ENCODE measurements at regions of chr10 and their contacts with region 1.

Region 1: DNA sequence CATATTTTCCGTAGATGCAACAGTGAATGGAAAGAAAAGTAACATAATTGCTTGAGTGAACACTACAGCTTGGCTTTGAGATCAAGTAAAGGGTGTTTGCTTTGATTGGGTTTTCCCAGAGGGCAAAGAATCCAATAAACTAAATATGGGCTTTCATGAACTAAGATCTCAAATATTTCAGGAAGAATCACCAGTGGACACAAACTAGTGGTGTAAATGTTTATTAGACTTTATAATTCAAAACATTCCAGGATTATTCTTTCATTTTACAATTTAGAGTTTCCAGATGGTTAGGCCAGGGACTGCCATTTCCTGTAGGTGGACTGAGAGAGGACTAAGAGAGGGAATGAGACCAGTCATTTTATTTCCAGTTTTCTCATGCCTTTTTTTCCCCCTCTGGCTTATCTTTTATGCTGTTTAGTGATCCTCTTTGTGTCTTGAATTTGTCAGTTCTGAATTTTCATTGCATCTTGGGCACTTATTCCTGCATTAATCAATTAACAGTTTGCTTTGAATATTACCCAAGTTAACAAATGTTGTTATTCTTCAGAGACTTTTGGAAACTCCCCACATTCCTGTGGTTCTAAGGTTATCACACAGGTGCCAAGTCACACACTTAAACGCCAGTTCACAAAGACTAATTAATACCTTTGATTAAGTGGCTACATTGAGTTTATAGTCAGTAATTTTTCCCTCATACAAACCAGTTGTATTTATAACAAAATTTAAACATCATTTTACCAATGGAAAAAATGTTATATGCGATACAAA is 12.2 kb downstream of the CISD1 start:
- DNase-seq: no peak

Region 2: GRCh38 chr10:58217612-58218011 is 63.6 kb before region 1 on chr10:
- intact Hi-C with region 1: loop called in 1 of 2 experiments (anchors 2 kb)
- DNase-seq: no peak

Region 3: DNA sequence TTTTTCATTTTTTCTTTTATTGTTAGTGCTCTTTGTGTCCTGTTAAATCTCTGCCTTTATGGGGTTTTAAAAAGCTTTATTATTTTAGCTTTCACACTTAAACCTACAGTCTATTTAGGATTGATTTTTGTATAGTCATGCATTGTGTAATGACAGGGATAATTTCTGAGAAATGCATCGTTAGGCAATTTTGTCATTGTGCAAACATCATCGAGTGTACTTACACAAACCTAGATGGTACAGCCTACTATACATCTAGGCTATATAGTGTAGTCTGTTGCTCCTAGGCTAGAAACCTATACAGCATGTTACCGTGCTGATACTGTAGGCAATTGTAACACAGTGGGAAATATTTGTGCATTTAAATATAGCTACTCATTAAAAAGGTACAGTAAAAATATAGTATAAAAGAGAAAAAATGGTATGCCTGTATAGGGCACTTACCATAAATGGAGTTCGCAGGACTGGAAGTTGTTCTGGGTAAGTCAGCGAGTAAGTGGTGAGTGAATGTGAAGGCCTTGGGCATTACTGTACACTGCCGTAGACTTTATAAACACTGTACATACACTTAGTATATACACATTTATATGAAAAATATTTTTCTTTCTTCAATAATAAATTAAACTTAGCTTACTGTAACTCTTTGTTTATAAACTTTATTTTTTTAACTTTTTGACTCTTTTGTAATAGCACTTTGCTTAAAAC is 69.6 kb after region 1 on chr10:
- intact Hi-C with region 1: no loop called
- DNase-seq: no peak